ENCODE measurements at regions of chr10 and their contacts with region 1.

Region 1: GRCh38 chr10:30359373-30360206 is 10.5 kb upstream of the MTPAP start:
- DNase-seq: peak; percentile 81
- ATAC-seq: peak; percentile 89
- H3K4me3 Mint-ChIP-seq: no peak overlapping the region
- H3K27ac Mint-ChIP-seq: no peak overlapping the region
- H3K4me1 Mint-ChIP-seq: peaks cover 9% of the 10 kb centered on the region
- H3K27me3 Mint-ChIP-seq: peaks cover 7% of the 10 kb centered on the region

Region 2: DNA sequence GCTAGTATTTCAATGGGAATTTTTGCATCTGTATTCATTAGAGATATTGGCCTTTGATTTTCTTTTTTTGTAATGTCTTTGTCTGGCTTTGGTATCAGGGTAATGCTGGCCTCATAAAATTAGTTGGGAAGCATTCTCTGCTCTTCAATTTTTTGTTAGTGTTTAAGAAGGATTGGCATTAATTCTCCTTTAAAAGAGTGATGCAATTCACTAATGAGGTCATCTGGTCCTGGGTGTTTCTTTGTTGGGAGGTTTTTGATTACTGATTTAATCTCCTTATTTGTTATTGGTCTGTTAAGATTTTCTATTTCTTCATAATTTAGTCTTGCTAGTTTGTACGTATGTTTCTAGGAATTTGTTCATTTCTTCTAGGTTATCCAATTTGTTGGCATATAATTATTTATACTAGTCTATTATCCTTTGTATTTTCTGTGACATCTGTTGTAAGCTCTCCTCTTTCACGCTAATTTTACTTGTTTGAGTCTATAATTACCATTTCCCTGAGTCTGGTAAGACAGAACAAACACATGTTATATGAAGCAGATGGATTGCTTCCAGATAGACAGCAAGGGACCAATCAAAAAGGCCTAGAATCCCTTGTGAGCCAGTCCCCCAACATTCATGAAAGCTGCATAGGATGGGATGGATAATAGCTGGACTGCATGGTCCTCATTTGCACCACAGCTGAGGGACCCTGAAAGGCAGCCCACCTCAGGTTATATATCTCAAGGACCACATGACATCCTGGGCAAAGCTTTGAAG is 64.9 kb before region 1 on chr10:
- CTCF ChIA-PET with region 1: no interaction called
- DNase-seq: no peak
- ATAC-seq: no peak
- H3K4me3 Mint-ChIP-seq: no peak overlapping the region
- H3K27ac Mint-ChIP-seq: no peak overlapping the region
- H3K4me1 Mint-ChIP-seq: no peaks in the 10 kb centered on the region
- H3K27me3 Mint-ChIP-seq: peaks cover 29% of the 10 kb centered on the region

Region 3: DNA sequence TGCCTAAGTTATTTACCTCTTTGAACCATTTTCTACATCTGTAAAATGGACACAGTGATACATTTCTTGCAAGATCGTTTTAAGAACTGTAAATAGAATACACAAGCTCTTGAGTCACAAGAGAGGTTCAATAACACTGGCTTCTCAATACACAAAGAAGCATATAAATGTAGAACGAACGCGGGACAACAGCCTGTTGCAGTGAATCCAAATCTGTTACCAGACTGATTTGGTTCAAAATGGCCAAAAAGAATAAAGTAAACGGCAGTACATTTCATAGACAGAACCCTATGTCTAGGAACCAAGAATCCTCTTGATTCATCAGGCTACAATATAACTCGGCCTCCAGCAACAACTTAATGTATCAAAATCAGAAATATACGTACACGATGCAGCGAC is 11.2 kb before region 1 on chr10:
- CTCF ChIA-PET with region 1: interaction called, 60 read pairs
- DNase-seq: no peak
- ATAC-seq: peak; percentile 10
- H3K4me3 Mint-ChIP-seq: peak overlapping the region; percentile 92
- H3K27ac Mint-ChIP-seq: peak overlapping the region; percentile 95
- H3K4me1 Mint-ChIP-seq: peaks cover 42% of the 10 kb centered on the region
- H3K27me3 Mint-ChIP-seq: peaks cover 4% of the 10 kb centered on the region

Region 4: DNA sequence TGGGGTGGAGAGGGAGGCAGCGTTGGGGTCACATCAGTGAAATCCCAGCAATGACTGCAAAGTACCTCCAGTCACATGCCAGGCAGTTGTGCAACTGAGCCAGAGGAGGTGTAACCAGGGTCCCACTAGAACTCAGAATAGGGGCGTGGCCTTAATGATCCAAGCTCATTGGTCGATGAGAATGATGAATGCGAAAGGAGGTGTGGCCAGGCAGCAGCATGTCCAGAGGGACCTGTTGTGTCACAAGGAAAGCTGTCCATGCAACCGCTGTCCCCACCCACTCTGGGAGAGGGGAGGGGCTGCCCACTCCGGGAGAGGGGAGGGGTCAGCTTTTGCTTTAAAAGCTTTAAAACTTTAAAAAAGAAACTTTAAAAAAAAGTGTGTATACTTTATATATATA is 14.8 kb after region 1 on chr10:
- CTCF ChIA-PET with region 1: interaction called, 20 read pairs
- DNase-seq: no peak
- ATAC-seq: no peak
- H3K4me3 Mint-ChIP-seq: no peak overlapping the region
- H3K27ac Mint-ChIP-seq: peak overlapping the region; percentile 87
- H3K4me1 Mint-ChIP-seq: peaks cover 42% of the 10 kb centered on the region
- H3K27me3 Mint-ChIP-seq: peaks cover 17% of the 10 kb centered on the region

Region 5: GRCh38 chr10:30384701-30385201 is 25.2 kb after region 1 on chr10:
- CTCF ChIA-PET with region 1: interaction called, 32 read pairs
- DNase-seq: peak; percentile 57
- ATAC-seq: peak; percentile 67
- H3K4me3 Mint-ChIP-seq: no peak overlapping the region
- H3K27ac Mint-ChIP-seq: no peak overlapping the region
- H3K4me1 Mint-ChIP-seq: no peaks in the 10 kb centered on the region
- H3K27me3 Mint-ChIP-seq: peaks cover 23% of the 10 kb centered on the region

Region 6: GRCh38 chr10:30392564-30392990 is 33.0 kb after region 1 on chr10:
- CTCF ChIA-PET with region 1: interaction called, 26 read pairs
- DNase-seq: peak; percentile 84
- ATAC-seq: peak; percentile 100
- H3K4me3 Mint-ChIP-seq: peak overlapping the region; percentile 46
- H3K27ac Mint-ChIP-seq: no peak overlapping the region
- H3K4me1 Mint-ChIP-seq: peaks cover 10% of the 10 kb centered on the region
- H3K27me3 Mint-ChIP-seq: peaks cover 30% of the 10 kb centered on the region

Measured in activated CD8-positive, alpha-beta memory T cell treated with anti-CD3 and anti-CD28 coated beads, Interleukin-2, amount 10 ng/mL, durations not matched to agents 7 days and 5 days (primary cell).